Caco-2 (cell line): ENCODE measurements at regions of chr10 and their contacts with region 1.

Region 1: GRCh38 chr10:91220194-91220953 is at the start of gene PCGF5:
- DNase-seq: peak; percentile 89 to 96
- H3K4me3 ChIP-seq: peak within 1 kb of the TSS; percentile 93
- H3K4me3 Mint-ChIP-seq: peak within 1 kb of the TSS; percentile 86
- H3K27ac Mint-ChIP-seq: no peak within 1 kb of the TSS
- H3K4me1 ChIP-seq: no peaks in the 10 kb centered on the region
- H3K4me1 Mint-ChIP-seq: peaks cover 13% of the 10 kb centered on the region
- H3K27me3 ChIP-seq: no peaks in the 10 kb centered on the region
- H3K27me3 Mint-ChIP-seq: peaks cover 14% of the 10 kb centered on the region
- CTCF ChIP-seq: peak; percentile 23 to 26
- total RNA-seq, gene PCGF5: 9.6 and 12.0 TPM in 2 replicates

Region 2: GRCh38 chr10:90871766-90872647 is 348.4 kb before region 1 on chr10 and contains the start of gene RPP30:
- CTCF ChIA-PET with region 1: no interaction called
- POLR2A ChIA-PET with region 1: no interaction called
- intact Hi-C with region 1: loop called (anchors 10 kb)
- DNase-seq: peak; percentile 85 to 89
- H3K4me3 ChIP-seq: peak within 1 kb of the TSS; percentile 71
- H3K4me3 Mint-ChIP-seq: peak within 1 kb of the TSS; percentile 96
- H3K27ac Mint-ChIP-seq: peak within 1 kb of the TSS; percentile 85
- H3K4me1 ChIP-seq: peaks cover 6% of the 10 kb centered on the region; the same call in 1 of the 2 replicates
- H3K4me1 Mint-ChIP-seq: peaks cover 6% of the 10 kb centered on the region
- H3K27me3 ChIP-seq: no peaks in the 10 kb centered on the region
- H3K27me3 Mint-ChIP-seq: peaks cover 3% of the 10 kb centered on the region
- CTCF ChIP-seq: no peak
- total RNA-seq, gene RPP30: 66.5 and 67.6 TPM in 2 replicates

Region 3: GRCh38 chr10:90920986-90921666 is 299.2 kb before region 1 on chr10 and contains the start of gene ANKRD1:
- CTCF ChIA-PET with region 1: no interaction called
- POLR2A ChIA-PET with region 1: no interaction called
- intact Hi-C with region 1: loop called (anchors 2 kb)
- DNase-seq: peak; percentile 91 to 96
- H3K4me3 ChIP-seq: peak within 1 kb of the TSS; percentile 21
- H3K4me3 Mint-ChIP-seq: peak within 1 kb of the TSS; percentile 95
- H3K27ac Mint-ChIP-seq: peak within 1 kb of the TSS; percentile 96
- H3K4me1 ChIP-seq: peaks cover 24% of the 10 kb centered on the region
- H3K4me1 Mint-ChIP-seq: peaks cover 29% of the 10 kb centered on the region
- H3K27me3 ChIP-seq: no peaks in the 10 kb centered on the region
- H3K27me3 Mint-ChIP-seq: no peaks in the 10 kb centered on the region
- CTCF ChIP-seq: no peak
- total RNA-seq, gene ANKRD1: 75.7 and 97.4 TPM in 2 replicates

Region 4: DNA sequence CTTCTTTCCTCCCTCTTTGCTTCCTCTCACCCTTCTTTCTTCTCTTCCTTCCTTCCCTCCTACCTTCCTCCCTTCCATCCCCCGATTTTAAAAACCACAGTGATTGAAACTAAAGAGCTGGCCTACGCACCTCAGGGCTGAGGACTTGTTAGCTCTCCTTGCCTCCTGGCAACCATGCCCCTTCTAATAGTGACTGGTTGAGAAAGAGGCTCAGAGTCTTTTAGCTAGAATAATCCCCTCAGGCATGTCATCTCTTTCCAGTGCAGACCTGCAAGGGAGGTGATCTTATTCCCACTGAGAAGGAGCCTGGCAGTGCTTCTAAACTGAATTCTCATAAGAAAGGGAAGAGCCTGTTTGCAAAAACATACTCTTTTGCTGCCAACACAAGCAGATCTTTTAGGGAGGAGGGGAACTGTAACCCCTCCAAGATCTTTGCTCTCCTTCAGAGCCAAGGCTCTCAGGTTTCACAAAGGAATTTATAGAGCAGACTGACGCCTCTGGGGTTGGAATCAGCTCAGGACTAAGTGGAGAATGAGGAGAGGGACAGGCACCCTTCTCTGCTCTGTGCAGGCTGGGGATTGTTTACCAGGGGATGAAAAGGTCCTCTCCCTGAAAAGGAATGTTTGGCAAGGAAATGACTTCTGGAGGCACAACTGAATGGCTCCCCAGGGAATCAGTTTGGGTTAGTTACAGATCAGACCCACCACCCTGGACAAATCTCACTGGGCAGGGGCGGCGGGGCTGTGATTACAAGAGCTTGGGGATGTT is 290.1 kb before region 1 on chr10:
- CTCF ChIA-PET with region 1: no interaction called
- POLR2A ChIA-PET with region 1: no interaction called
- intact Hi-C with region 1: loop called (anchors 2 kb)
- DNase-seq: peak; percentile 80 to 89
- H3K4me3 ChIP-seq: no peak overlapping the region
- H3K4me3 Mint-ChIP-seq: peak overlapping the region; percentile 54
- H3K27ac Mint-ChIP-seq: peak overlapping the region; percentile 89
- H3K4me1 ChIP-seq: peaks cover 69% of the 10 kb centered on the region
- H3K4me1 Mint-ChIP-seq: peaks cover 53% of the 10 kb centered on the region
- H3K27me3 ChIP-seq: no peaks in the 10 kb centered on the region
- H3K27me3 Mint-ChIP-seq: no peaks in the 10 kb centered on the region
- CTCF ChIP-seq: no peak